ENCODE measurements at regions of chr4 and their contacts with region 1.

Region 1: DNA sequence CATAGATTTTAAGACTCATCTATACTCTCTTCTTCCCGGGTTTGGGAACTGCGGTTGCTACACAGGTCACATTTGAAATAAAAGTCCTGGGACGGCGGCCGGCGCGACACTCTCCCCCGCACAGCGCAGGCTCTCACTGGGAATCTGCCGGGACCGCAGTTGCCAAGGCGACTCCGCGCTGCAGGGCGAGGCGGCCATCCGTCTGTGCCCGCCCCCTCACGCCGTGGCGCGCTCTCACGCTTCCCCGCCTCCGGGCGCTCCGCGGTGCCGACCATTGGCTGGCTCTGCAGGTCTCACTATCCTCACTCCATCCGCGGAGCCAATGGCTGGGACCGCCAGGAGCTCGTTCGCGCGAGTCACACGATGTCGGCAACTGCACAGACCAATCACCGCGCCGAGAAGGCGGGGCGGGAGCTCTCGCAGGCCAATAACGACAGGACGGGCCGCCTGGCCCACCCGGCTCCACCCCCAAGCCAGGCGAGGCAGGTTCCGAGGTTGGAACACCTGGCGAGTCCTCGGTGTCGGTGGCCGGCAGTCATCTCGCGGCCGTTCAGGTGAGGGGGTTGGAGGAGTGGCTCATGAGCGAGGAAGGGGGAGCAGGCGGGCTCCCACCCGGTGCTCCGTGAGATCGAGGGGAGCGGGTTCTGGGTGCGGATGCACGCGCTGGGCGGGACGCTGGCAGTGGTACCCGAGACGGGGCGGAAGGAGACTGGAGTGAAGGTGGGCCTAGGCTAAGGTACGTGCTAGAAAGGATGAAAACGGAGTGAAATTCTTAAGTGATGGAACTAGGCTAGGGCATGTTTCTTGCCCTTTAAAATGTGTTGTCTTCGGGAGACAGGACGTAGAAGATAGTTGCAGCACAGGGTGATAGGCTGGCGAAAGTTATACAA is at the start of gene MSMO1:
- DNase-seq: peak; percentile 99
- ATAC-seq: peak; percentile 98
- H3K4me3 ChIP-seq: peak within 1 kb of the TSS; percentile 79
- H3K27ac ChIP-seq: peak within 1 kb of the TSS; percentile 17
- H3K4me1 ChIP-seq: peaks cover 3% of the 10 kb centered on the region; the same call in 1 of the 2 replicates
- H3K27me3 ChIP-seq: no peaks in the 10 kb centered on the region
- CTCF ChIP-seq: no peak
- POLR2A ChIP-seq: peak; percentile 69; the same call in 1 of the 2 replicates
- RAD21 ChIP-seq: no peak
- total RNA-seq, gene MSMO1: 40.1 and 118 TPM in 2 replicates

Region 2: GRCh38 chr4:165112368-165113139 is 214.9 kb before region 1 on chr4 and contains the start of gene TMEM192:
- CTCF ChIA-PET with region 1: no interaction called
- POLR2A ChIA-PET with region 1: no interaction called
- dilution Hi-C with region 1: no loop called
- in situ Hi-C with region 1: no loop called
- intact Hi-C with region 1: loop called (anchors 1 kb)
- DNase-seq: peak; percentile 85
- ATAC-seq: peak; percentile 99
- H3K4me3 ChIP-seq: peak within 1 kb of the TSS; percentile 83
- H3K27ac ChIP-seq: peak within 1 kb of the TSS; percentile 56
- H3K4me1 ChIP-seq: peaks cover 2% of the 10 kb centered on the region; the same call in 1 of the 2 replicates
- H3K27me3 ChIP-seq: no peaks in the 10 kb centered on the region
- CTCF ChIP-seq: peak; percentile 36; the same call in 1 of the 2 replicates
- POLR2A ChIP-seq: no peak; the same call in none of the 2 replicates
- RAD21 ChIP-seq: no peak
- total RNA-seq, gene TMEM192: 11.1 and 17.2 TPM in 2 replicates

Region 3: DNA sequence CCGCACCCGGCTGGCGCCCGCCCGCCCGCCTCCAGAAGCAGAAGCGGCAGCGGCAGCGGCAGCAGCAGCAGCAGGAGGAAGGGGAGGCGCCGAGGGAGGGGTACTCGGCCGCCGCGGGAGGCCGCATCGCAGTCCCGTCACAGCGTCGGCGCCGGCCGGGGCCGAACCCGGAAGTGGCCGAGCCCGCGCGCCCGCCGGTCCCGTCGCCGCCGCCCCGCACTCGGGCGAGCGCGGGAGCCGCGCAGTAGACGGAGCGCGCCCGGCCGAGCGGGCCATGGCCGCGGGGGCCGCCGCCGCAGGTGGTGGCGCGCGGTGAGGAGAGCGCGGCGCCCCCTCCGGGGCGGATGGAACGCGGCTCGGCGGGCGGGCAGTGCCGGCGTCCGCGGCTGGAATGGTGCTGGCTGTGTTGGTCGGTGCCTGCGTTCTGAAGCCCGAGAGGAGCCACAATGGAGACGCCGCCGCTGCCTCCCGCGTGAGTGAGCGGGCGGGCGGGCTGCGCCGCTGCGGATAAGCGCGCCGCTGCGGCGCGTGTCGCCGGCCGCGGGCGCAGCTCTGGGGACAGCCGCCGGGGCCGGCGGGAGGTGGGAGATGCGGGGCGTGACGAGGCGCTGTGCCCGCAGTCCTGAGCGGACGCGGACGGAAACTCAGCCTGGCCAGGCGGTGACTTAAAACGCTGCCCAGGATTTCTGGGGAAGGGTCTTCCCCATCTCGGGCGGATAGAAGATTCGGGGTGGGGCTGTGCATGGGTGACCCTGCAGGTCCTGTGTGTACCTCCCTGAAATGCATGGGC is 119.8 kb before region 1 on chr4 and contains the start of gene KLHL2:
- CTCF ChIA-PET with region 1: no interaction called
- POLR2A ChIA-PET with region 1: no interaction called
- dilution Hi-C with region 1: no loop called
- in situ Hi-C with region 1: loop called (anchors 25 kb)
- intact Hi-C with region 1: loop called (anchors 1 kb)
- DNase-seq: peak; percentile 74
- ATAC-seq: peak; percentile 94
- H3K4me3 ChIP-seq: peak within 1 kb of the TSS; percentile 74
- H3K27ac ChIP-seq: peak within 1 kb of the TSS; percentile 3; the same call in 1 of the 2 replicates
- H3K4me1 ChIP-seq: peaks cover 4% of the 10 kb centered on the region; the same call in 1 of the 2 replicates
- H3K27me3 ChIP-seq: no peaks in the 10 kb centered on the region
- CTCF ChIP-seq: no peak
- POLR2A ChIP-seq: peak; percentile 53
- RAD21 ChIP-seq: no peak
- total RNA-seq, gene KLHL2: 12.4 and 20.6 TPM in 2 replicates

Region 4: GRCh38 chr4:165364452-165365080 is 37.1 kb after region 1 on chr4:
- CTCF ChIA-PET with region 1: no interaction called
- POLR2A ChIA-PET with region 1: no interaction called
- dilution Hi-C with region 1: no loop called
- in situ Hi-C with region 1: no loop called
- intact Hi-C with region 1: no loop called
- DNase-seq: no peak
- ATAC-seq: no peak
- H3K4me3 ChIP-seq: no peak overlapping the region
- H3K27ac ChIP-seq: no peak overlapping the region
- H3K4me1 ChIP-seq: no peaks in the 10 kb centered on the region
- H3K27me3 ChIP-seq: peaks cover 4% of the 10 kb centered on the region
- CTCF ChIP-seq: no peak
- POLR2A ChIP-seq: no peak
- RAD21 ChIP-seq: no peak

Region 5: DNA sequence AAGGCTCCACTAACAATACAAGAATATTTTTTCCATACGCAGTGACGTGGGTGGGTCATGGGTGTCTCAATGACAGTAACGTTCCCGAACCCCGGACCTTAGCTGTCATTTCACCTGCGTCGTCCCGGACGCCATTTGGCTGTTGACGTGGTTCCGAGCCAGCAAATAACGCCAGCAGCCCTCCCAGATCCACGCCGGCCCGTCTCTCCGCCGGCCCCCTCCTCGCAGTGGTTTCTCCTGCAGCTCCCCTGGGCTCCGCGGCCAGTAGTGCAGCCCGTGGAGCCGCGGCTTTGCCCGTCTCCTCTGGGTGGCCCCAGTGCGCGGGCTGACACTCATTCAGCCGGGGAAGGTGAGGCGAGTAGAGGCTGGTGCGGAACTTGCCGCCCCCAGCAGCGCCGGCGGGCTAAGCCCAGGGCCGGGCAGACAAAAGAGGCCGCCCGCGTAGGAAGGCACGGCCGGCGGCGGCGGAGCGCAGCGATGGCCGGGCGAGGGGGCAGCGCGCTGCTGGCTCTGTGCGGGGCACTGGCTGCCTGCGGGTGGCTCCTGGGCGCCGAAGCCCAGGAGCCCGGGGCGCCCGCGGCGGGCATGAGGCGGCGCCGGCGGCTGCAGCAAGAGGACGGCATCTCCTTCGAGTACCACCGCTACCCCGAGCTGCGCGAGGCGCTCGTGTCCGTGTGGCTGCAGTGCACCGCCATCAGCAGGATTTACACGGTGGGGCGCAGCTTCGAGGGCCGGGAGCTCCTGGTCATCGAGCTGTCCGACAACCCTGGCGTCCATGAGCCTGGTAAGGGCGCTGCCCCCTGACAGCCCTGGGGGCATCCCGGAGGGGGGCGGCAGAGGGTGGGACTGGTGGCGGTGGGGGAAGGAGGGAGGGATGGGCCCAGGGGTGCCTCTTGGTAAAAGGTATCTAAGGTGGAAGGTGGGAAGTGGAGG is 51.6 kb after region 1 on chr4 and contains the start of gene CPE:
- CTCF ChIA-PET with region 1: no interaction called
- POLR2A ChIA-PET with region 1: no interaction called
- dilution Hi-C with region 1: no loop called
- in situ Hi-C with region 1: no loop called
- intact Hi-C with region 1: loop called (anchors 2 kb)
- DNase-seq: peak; percentile 44
- ATAC-seq: peak; percentile 99
- H3K4me3 ChIP-seq: peak within 1 kb of the TSS; percentile 46
- H3K27ac ChIP-seq: no peak within 1 kb of the TSS
- H3K4me1 ChIP-seq: no peaks in the 10 kb centered on the region
- H3K27me3 ChIP-seq: peaks cover 2% of the 10 kb centered on the region; the same call in 1 of the 2 replicates
- CTCF ChIP-seq: peak; percentile 45
- POLR2A ChIP-seq: no peak
- RAD21 ChIP-seq: no peak; the same call in 1 of the 2 replicates
- total RNA-seq, gene CPE: 3.6 and 4.4 TPM in 2 replicates

Measured in IMR-90 (cell line).